K562 (cell line): ENCODE measurements at regions of chr1 and their contacts with region 1.

Region 1: GRCh38 chr1:67921725-67922489 is 88.6 kb upstream of the GNG12 start:
- DNase-seq: peak; percentile 29 to 75 (median 54)
- ATAC-seq: peak; percentile 77
- H3K4me3 ChIP-seq: no peak overlapping the region
- H3K27ac ChIP-seq: no peak overlapping the region
- H3K4me1 ChIP-seq: peaks cover 11 to 36% of the 10 kb centered on the region in 2 experiments
- H3K27me3 ChIP-seq: no peaks in the 10 kb centered on the region
- CTCF ChIP-seq: no peak
- EP300 ChIP-seq: peak; percentile 75; the same call in 1 of the 2 replicates
- POLR2A ChIP-seq: no peak
- RAD21 ChIP-seq: peak; percentile 10 to 21; a peak in 2 of 4 replicates

Region 2: DNA sequence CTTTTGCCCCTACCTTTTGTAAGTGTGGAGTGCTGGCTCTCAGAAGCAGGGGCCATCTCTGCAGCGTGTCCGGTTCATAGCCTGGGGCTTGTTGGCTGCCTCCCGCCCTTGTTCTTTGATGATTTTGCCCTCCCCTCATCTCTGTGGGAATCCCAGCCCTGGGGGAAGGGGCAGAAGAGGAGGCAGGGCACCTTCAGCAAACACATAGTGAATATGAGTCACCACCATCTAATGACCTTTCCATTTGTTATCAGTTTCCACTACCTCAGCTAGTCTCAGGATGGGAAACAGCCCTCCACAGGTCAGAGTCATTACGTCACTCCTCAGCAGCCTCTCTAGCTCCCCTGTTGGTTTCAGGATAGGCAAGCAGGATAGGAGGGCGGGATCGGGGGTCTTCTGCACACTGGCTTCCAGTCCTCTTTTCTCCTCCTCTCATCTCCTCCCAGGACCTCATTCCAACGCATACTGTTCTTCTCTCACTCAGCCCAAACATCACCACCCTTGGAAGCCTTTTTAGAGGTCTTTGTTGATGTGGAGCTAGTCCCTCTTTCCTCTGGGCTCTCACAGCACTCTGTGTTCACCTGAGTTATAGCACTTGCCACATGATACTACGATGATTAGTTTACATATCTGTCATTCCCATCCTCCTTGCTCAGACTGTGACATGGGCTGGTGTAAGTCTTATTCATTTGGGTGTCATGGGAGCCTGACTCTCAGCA is 221.1 kb before region 1 on chr1:
- CTCF ChIA-PET with region 1: no interaction called
- POLR2A ChIA-PET with region 1: no interaction called
- in situ Hi-C with region 1: no loop called
- intact Hi-C with region 1: no loop called
- DNase-seq: peak; percentile 79 to 93 (median 86)
- ATAC-seq: peak; percentile 94
- H3K4me3 ChIP-seq: no peak overlapping the region
- H3K27ac ChIP-seq: peak overlapping the region; percentile 77
- H3K4me1 ChIP-seq: peaks cover 15 to 30% of the 10 kb centered on the region in 2 experiments
- H3K27me3 ChIP-seq: no peaks in the 10 kb centered on the region
- CTCF ChIP-seq: peak; percentile 65 to 69 (median 65)
- EP300 ChIP-seq: peak; percentile 82
- POLR2A ChIP-seq: no peak
- RAD21 ChIP-seq: peak in 1 of 2 experiments; percentile 36; a peak in 2 of 4 replicates

Region 3: GRCh38 chr1:67850151-67850551 is 71.8 kb before region 1 on chr1:
- CTCF ChIA-PET with region 1: no interaction called
- POLR2A ChIA-PET with region 1: no interaction called
- in situ Hi-C with region 1: no loop called
- intact Hi-C with region 1: no loop called
- DNase-seq: peak; percentile 15 to 49 (median 26)
- ATAC-seq: peak; percentile 71
- H3K4me3 ChIP-seq: no peak overlapping the region
- H3K27ac ChIP-seq: no peak overlapping the region
- H3K4me1 ChIP-seq: no peaks in the 10 kb centered on the region; a peak in 2 of 5 replicates
- H3K27me3 ChIP-seq: peaks cover 0 to 1% of the 10 kb centered on the region in 2 experiments; a peak in 1 of 5 replicates
- CTCF ChIP-seq: peak; percentile 41 to 75 (median 56); a peak in 4 of 6 replicates
- EP300 ChIP-seq: no peak
- POLR2A ChIP-seq: no peak
- RAD21 ChIP-seq: peak; percentile 87 to 91

Region 4: GRCh38 chr1:68234094-68234493 is 312.2 kb after region 1 on chr1:
- CTCF ChIA-PET with region 1: no interaction called
- POLR2A ChIA-PET with region 1: no interaction called
- in situ Hi-C with region 1: no loop called
- intact Hi-C with region 1: no loop called
- DNase-seq: no peak
- ATAC-seq: no peak
- H3K4me3 ChIP-seq: no peak overlapping the region
- H3K27ac ChIP-seq: no peak overlapping the region
- H3K4me1 ChIP-seq: no peaks in the 10 kb centered on the region; a peak in 2 of 5 replicates
- H3K27me3 ChIP-seq: peaks cover 16 to 28% of the 10 kb centered on the region in 2 experiments; a peak in 3 of 5 replicates
- CTCF ChIP-seq: no peak
- EP300 ChIP-seq: no peak
- POLR2A ChIP-seq: no peak
- RAD21 ChIP-seq: no peak

Region 5: DNA sequence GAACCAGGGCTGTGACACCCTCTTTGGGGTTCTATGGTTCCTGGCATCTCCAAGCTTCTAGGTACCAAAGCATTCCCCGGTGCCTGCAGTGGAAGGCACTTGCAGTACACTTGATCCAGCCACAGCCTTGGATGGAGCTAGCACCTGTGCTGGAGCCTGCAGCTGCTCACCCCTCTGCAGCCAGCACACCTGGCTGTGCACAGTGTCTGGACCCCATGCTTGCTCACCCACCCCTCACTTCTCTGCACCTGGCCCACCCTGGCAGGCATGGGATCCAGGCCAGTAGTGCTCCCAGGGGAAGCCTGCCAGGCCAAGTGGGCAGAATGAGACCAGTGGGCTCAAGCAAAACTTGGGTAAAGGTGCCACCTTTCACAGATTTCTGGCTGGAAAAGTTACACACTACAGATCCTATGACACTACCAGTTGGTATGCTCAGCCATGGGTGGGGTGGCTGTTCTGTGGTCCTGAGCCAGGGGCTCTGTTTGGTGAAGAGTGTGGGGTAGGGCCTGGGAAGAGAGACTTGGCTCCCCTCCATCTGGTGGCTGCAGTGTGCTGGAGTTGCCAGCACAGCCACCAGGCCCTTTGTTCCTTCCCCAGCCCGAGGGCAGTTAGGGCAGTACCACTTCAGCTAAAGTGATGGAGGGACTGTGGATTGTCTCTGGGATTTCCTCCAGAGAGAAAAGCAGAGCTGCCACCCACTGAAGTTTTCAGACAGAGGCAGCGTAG is 1488.0 kb after region 1 on chr1:
- CTCF ChIA-PET with region 1: no interaction called
- POLR2A ChIA-PET with region 1: no interaction called
- in situ Hi-C with region 1: no loop called
- intact Hi-C with region 1: loop called (anchors 10 kb)
- DNase-seq: no peak
- ATAC-seq: no peak
- H3K4me3 ChIP-seq: no peak overlapping the region
- H3K27ac ChIP-seq: no peak overlapping the region
- H3K4me1 ChIP-seq: no peaks in the 10 kb centered on the region
- H3K27me3 ChIP-seq: no peaks in the 10 kb centered on the region
- CTCF ChIP-seq: no peak
- EP300 ChIP-seq: no peak
- POLR2A ChIP-seq: no peak
- RAD21 ChIP-seq: no peak